ENCODE measurements at regions of chr17 and their contacts with region 1.

Region 1: GRCh38 chr17:2029911-2030778 is at the start of gene DPH1:
- DNase-seq: peak; percentile 88
- H3K4me3 ChIP-seq: peak within 1 kb of the TSS; percentile 81 to 97 (median 87)
- H3K27ac ChIP-seq: peak within 1 kb of the TSS; percentile 16
- H3K4me1 ChIP-seq: peaks cover 7% of the 10 kb centered on the region
- H3K27me3 ChIP-seq: peaks cover 15 to 16% of the 10 kb centered on the region in 2 experiments
- CTCF ChIP-seq: no peak
- POLR2A ChIP-seq: peak; percentile 69
- total RNA-seq, gene DPH1: 37.8 and 38.5 TPM in 2 replicates

Region 2: GRCh38 chr17:1882836-1883235 is 147.3 kb before region 1 on chr17:
- CTCF ChIA-PET with region 1: interaction called, 14 read pairs
- POLR2A ChIA-PET with region 1: no interaction called
- dilution Hi-C with region 1: no loop called
- intact Hi-C with region 1: no loop called
- DNase-seq: peak; percentile 45
- H3K4me3 ChIP-seq: no peak overlapping the region
- H3K27ac ChIP-seq: no peak overlapping the region
- H3K4me1 ChIP-seq: no peaks in the 10 kb centered on the region
- H3K27me3 ChIP-seq: no peaks in the 10 kb centered on the region
- CTCF ChIP-seq: peak; percentile 33 to 53
- POLR2A ChIP-seq: no peak

Region 3: GRCh38 chr17:2041561-2042366 is 11.6 kb after region 1 on chr17 and contains the start of gene OVCA2:
- CTCF ChIA-PET with region 1: interaction called, 4 read pairs
- POLR2A ChIA-PET with region 1: interaction called, 3 read pairs
- dilution Hi-C with region 1: no loop called
- intact Hi-C with region 1: loop called (anchors 1 kb)
- DNase-seq: peak; percentile 93
- H3K4me3 ChIP-seq: peak within 1 kb of the TSS; percentile 50 to 90 (median 80)
- H3K27ac ChIP-seq: peak within 1 kb of the TSS; percentile 80
- H3K4me1 ChIP-seq: peaks cover 7% of the 10 kb centered on the region
- H3K27me3 ChIP-seq: no peaks in the 10 kb centered on the region
- CTCF ChIP-seq: peak; percentile 45 to 60
- POLR2A ChIP-seq: peak; percentile 87
- total RNA-seq, gene OVCA2: 40.9 and 41.3 TPM in 2 replicates